CD8-positive, alpha-beta memory T cell (primary cell): ENCODE measurements at regions of chr14 and their contacts with region 1.

Region 1: GRCh38 chr14:71138448-71139293 is 231.4 kb downstream of the PCNX1 start:
- DNase-seq: peak; percentile 31 to 68 (median 47)
- H3K4me3 ChIP-seq: no peak overlapping the region
- H3K4me3 Mint-ChIP-seq: no peak overlapping the region
- H3K27ac ChIP-seq: no peak overlapping the region
- H3K27ac Mint-ChIP-seq: peak overlapping the region in 4 of 8 donors; percentile 13 to 90 (median 34)
- H3K4me1 ChIP-seq: peaks cover 18% of the 10 kb centered on the region
- H3K4me1 Mint-ChIP-seq: peaks cover 18 to 27% (median 24%) of the 10 kb centered on the region in 3 donors
- H3K27me3 ChIP-seq: no peaks in the 10 kb centered on the region
- H3K27me3 Mint-ChIP-seq: peaks cover 0 to 1% of the 10 kb centered on the region in 2 donors

Region 2: GRCh38 chr14:71166180-71166790 is 27.6 kb after region 1 on chr14:
- CTCF ChIA-PET with region 1: no interaction called
- POLR2A ChIA-PET with region 1: no interaction called
- DNase-seq: peak in 1 of 5 donors; percentile 7
- H3K4me3 ChIP-seq: no peak overlapping the region
- H3K4me3 Mint-ChIP-seq: no peak overlapping the region
- H3K27ac ChIP-seq: no peak overlapping the region
- H3K27ac Mint-ChIP-seq: peak overlapping the region in 3 of 8 donors; percentile 5 to 35 (median 13)
- H3K4me1 ChIP-seq: no peaks in the 10 kb centered on the region
- H3K4me1 Mint-ChIP-seq: peaks cover 14 to 19% (median 18%) of the 10 kb centered on the region in 3 donors
- H3K27me3 ChIP-seq: no peaks in the 10 kb centered on the region
- H3K27me3 Mint-ChIP-seq: peaks cover 0 to 4% of the 10 kb centered on the region in 2 donors

Region 3: DNA sequence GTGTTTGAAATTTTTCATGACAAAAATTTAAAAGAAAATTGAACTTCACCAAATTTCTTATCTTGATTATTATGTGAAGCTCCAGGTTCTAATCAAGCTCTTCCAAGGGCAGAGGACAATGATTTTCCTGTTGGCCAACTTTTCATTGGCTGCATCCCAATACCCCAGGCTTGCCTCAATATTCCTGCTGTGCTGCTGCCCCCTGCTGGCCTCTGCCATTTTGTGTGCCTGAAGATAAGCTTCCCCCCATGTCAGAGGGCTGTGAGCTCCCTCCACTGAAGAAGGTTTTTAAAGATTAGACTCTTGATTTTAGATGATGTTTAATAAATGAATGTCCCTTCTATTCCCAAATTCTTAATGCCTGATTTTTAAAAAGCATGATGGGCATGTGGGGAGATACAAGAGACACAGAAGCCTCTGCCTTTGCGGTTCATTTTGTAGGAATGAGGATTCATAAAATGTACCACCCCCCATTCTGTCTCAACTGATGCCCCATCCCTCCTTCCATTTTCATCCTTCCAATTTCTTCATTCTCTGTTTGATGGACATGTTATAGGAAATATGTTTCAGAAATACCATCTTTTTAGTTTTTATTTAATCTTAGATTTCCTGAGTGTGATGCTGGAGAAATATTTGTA is 716.8 kb after region 1 on chr14:
- CTCF ChIA-PET with region 1: interaction called, 10 read pairs
- POLR2A ChIA-PET with region 1: no interaction called
- DNase-seq: peak in 4 of 5 donors; percentile 5 to 57 (median 20)
- H3K4me3 ChIP-seq: no peak overlapping the region
- H3K4me3 Mint-ChIP-seq: no peak overlapping the region
- H3K27ac ChIP-seq: no peak overlapping the region
- H3K27ac Mint-ChIP-seq: no peak overlapping the region
- H3K4me1 ChIP-seq: no peaks in the 10 kb centered on the region
- H3K4me1 Mint-ChIP-seq: peaks cover 0 to 6% (median 0%) of the 10 kb centered on the region in 3 donors
- H3K27me3 ChIP-seq: no peaks in the 10 kb centered on the region
- H3K27me3 Mint-ChIP-seq: peaks cover 42 to 81% of the 10 kb centered on the region in 2 donors